Breast epithelium (tissue), 4 donors: ENCODE measurements at regions of chr2 and their contacts with region 1.

Region 1: DNA sequence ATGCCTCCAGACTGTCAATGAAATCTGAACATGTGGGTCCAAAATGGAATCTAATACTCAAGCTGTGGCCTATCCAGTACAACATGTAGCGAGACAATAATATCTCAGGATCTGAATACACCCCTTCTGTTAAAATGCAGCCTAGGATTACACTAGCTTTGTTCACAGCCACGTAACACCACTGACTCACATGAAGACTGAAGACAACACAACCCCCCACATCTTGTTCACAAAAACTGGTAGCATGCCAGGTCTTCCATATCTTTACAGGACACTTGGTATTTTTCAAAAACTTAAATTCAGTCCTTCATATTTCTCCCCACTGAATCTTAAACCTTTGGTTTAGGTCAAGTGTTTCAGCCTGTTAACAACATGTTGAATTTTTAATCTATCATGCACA is 84.2 kb downstream of the SLC8A1 start:
- DNase-seq: no peak
- H3K4me3 ChIP-seq: no peak overlapping the region
- H3K27ac ChIP-seq: no peak overlapping the region
- H3K4me1 ChIP-seq: no peaks in the 10 kb centered on the region
- H3K27me3 ChIP-seq: no peaks in the 10 kb centered on the region
- CTCF ChIP-seq: no peak
- POLR2A ChIP-seq: no peak

Region 2: GRCh38 chr2:40428439-40428838 is 60.8 kb after region 1 on chr2:
- intact Hi-C with region 1: loop called (anchors 2 kb)
- DNase-seq: no peak
- H3K4me3 ChIP-seq: no peak overlapping the region
- H3K27ac ChIP-seq: no peak overlapping the region
- H3K4me1 ChIP-seq: no peaks in the 10 kb centered on the region
- H3K27me3 ChIP-seq: no peaks in the 10 kb centered on the region
- CTCF ChIP-seq: no peak
- POLR2A ChIP-seq: no peak

Region 3: DNA sequence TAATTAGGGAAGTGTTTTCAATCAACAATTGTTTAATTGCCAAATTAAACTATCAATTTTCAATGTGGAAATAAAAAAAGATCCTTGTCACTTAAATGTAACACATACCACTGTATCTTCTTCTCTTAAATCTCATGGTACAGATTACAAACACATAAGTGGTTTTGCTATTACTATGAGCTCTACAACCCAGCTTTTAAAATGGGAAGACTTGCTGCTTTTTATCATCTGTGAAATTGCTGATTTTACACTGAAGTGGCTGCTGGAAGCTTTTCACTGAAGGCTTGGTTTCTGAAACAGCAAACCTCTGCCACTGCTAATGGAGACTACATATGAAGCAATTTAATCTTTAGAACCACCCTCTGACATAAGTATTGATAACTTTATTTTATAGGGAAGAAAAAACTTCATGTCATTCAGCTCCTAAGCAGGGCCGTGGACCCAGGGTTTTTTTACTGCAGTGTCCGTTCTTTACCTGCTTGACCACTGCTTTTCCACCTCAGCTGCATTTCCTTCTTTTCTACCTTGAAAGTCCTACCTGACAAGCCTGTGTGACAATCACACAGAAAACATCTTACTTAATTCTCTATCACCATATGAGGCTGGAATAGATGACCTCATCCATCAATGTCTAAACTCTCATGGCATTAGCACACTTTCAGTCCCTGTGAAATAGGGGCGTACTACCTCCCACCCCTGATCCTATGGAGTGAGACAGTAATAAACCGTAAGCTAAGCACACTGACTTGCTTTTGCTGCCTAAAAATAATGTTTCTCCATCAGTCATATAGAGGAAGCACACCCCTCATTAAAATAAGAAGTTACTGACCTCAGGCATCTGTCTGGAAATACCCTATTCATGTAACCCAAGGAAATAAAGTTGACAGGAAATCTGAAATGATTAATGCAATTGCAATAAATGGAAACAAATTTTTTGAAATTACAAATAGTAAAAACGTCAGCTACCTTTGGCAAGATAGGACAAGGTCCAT is 103.5 kb after region 1 on chr2:
- intact Hi-C with region 1: no loop called
- DNase-seq: no peak
- H3K4me3 ChIP-seq: no peak overlapping the region
- H3K27ac ChIP-seq: no peak overlapping the region
- H3K4me1 ChIP-seq: no peaks in the 10 kb centered on the region
- H3K27me3 ChIP-seq: no peaks in the 10 kb centered on the region
- CTCF ChIP-seq: no peak
- POLR2A ChIP-seq: no peak

Region 4: DNA sequence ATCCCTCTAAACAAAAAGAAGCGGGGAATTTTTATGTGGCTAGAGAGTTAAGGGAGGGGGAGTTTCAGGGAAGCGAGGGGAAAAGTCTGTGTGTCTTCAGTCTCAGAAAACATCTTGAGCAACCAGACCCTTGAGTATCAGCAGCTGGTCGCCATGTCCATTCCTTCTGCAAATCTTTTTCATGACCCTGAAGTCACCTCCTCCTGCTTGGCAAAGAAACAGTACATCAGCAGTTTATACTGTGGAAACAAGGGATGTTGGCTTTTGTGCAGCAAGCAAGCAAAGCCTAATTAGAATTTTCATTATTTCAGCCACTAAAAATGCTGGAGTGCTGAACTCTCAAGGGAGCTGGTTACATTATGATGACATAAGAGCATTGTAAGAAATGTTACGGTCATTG is 271.7 kb after region 1 on chr2:
- intact Hi-C with region 1: no loop called
- DNase-seq: no peak
- H3K4me3 ChIP-seq: no peak overlapping the region
- H3K27ac ChIP-seq: no peak overlapping the region
- H3K4me1 ChIP-seq: no peaks in the 10 kb centered on the region
- H3K27me3 ChIP-seq: no peaks in the 10 kb centered on the region
- CTCF ChIP-seq: no peak
- POLR2A ChIP-seq: no peak